Motor neuron (in vitro differentiated cells): ENCODE measurements at regions of chr19 and their contacts with region 1.

Region 1: GRCh38 chr19:6125571-6125989 is 9.9 kb upstream of the ACSBG2 start:
- ATAC-seq: peak in 6 of 8 experiments; percentile 22 to 93 (median 74)
- H3K4me3 ChIP-seq: no peak overlapping the region
- H3K27ac ChIP-seq: no peak overlapping the region
- H3K4me1 ChIP-seq: no peaks in the 10 kb centered on the region

Region 2: DNA sequence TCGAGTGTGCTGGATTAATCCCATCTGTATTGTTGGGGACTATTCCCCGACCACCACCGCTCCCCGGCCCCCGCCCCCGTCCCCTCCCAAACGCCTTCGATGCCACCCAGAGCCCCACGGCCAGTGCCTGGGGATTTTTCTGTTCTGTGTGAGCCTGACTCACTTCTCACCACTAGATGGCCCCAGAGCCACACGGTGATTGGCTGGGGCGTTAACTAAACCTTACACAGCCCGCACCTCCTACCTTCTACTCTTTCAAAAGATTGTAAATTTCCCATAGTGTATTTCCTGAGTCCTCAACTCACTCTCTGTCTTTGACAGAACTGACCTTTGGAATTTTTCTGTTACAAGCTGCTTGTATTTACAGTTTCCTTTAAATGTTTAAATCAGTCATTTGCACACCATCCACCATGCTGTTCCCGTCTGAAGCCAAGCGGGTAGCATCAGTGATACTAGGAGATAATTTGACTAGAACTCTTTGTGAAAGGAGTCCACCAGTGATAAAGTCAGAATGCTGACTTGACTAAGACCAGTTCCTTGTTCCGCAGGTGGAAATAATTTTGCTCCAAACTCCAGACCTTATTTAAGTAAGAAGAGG is 76.7 kb before region 1 on chr19:
- in situ Hi-C with region 1: loop called in 1 of 9 experiments (anchors 10 kb)
- ATAC-seq: peak; percentile 98 to 100 (median 99)
- H3K4me3 ChIP-seq: peak overlapping the region in 3 of 5 donors; percentile 10 to 26 (median 25)
- H3K27ac ChIP-seq: no peak overlapping the region
- H3K4me1 ChIP-seq: peaks cover 0 to 8% of the 10 kb centered on the region in 2 donors